Activated T-helper 1 cell treated with anti-CD3 and anti-CD28 coated beads, Interleukin-12 subunit alpha, Interleukin-12 subunit beta, Interleukin-2, Interleukin-4 antibody, amounts not matched to agents 30 ng/mL and 10 ng/mL and 1 ng/mL, durations not matched to agents 14 hours and 24 hours and 36 hours (primary cell): ENCODE measurements at regions of chr6 and their contacts with region 1.

Region 1: GRCh38 chr6:129748212-129748900 is 38.4 kb upstream of the ARHGAP18 start:
- DNase-seq: peak; percentile 37
- H3K4me3 Mint-ChIP-seq: peak overlapping the region; percentile 63
- H3K27ac Mint-ChIP-seq: peak overlapping the region; percentile 63
- H3K4me1 Mint-ChIP-seq: peaks cover 46% of the 10 kb centered on the region
- H3K27me3 Mint-ChIP-seq: no peaks in the 10 kb centered on the region

Region 2: GRCh38 chr6:129448965-129449364 is 299.4 kb before region 1 on chr6:
- intact Hi-C with region 1: loop called (anchors 1 kb)
- DNase-seq: no peak
- H3K4me3 Mint-ChIP-seq: peak overlapping the region; percentile 6
- H3K27ac Mint-ChIP-seq: no peak overlapping the region
- H3K4me1 Mint-ChIP-seq: peaks cover 74% of the 10 kb centered on the region
- H3K27me3 Mint-ChIP-seq: peaks cover 1% of the 10 kb centered on the region

Region 3: GRCh38 chr6:129730477-129731165 is 17.7 kb before region 1 on chr6:
- intact Hi-C with region 1: loop called (anchors 1 kb)
- DNase-seq: no peak
- H3K4me3 Mint-ChIP-seq: no peak overlapping the region
- H3K27ac Mint-ChIP-seq: peak overlapping the region; percentile 29
- H3K4me1 Mint-ChIP-seq: peaks cover 15% of the 10 kb centered on the region
- H3K27me3 Mint-ChIP-seq: peaks cover 4% of the 10 kb centered on the region

Region 4: DNA sequence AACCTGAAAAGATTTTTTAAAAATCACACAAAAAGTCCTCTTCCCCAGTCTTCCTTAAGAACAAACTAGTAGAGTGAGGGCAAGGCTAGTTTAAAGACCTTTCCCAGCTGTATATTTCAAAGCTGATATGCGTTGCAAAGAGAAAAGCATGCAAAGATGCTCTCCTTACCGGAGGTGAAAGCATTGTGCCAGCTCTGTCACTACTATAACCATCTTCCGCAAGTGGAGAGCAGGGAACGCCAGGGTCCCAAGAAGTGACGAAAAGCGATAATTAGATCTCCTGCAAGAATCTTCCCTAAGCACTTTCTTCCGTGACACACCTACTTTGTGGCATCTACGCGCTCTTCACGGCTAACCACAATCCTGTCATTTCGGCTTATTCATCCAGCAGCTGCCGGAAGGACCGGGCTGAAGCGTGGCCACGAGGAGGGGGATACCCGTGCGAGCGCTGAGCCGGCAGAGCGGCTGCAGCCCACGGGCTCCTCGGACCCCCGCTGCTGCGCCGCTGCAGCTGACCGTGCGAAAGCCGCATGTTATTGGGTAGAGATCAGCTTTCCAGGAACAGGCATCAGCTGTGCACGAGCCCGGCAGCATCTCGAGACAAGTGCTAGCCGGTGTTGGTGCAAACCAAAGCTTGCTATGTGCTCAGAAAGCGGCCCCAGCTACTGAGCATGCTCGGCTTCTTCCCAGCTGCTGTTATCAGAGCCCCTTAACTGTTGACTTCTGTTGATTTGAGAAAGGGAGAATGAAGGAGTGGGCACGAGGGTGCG is 18.8 kb after region 1 on chr6:
- intact Hi-C with region 1: loop called (anchors 1 kb)
- DNase-seq: peak; percentile 66
- H3K4me3 Mint-ChIP-seq: peak overlapping the region; percentile 83
- H3K27ac Mint-ChIP-seq: peak overlapping the region; percentile 66
- H3K4me1 Mint-ChIP-seq: peaks cover 37% of the 10 kb centered on the region
- H3K27me3 Mint-ChIP-seq: peaks cover 55% of the 10 kb centered on the region

Region 5: DNA sequence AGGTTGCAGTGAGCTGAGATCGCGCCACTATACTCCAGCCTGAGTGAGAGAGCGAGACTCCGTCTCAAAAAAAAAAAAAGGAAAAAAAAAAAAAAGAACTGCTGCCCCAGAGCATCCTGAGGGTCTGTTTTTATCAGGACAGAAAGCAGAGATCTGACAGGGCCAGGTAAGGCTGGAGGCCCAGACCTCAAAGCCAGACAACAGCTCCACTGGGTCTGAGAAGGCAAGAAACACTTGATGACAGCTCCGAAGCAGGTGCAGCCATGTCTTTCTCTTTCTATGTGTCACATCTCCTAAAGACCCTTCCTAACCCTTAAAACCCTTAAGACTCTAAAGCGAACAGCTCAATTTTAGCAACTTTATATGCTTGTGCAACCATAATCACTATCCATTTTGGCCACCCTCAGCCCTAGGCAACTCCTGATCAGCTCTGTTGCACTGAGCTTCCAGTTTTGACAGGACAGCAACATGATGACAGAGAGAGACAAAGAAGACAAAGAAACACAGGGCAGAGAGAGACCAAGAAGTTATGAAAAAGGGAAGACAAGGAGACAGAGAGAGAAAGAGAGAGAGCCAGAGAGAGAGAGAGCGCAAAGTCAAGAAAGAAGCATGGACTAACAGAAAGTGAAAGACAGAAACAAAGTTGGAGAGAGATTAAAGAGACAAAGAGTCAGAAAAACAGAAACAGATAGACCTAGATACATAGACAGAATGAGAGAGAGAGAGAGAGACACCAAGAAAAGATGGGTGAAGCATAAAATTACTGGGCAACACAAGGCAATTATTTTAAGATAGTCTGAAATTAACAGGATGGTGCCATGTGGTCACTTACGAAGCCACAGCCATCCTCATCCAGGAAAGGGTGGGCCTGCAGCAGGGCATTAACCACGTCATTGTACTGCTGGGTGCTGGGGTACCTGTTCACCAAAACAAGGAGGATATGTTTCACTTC is 435.2 kb after region 1 on chr6:
- intact Hi-C with region 1: loop called (anchors 1 kb)
- DNase-seq: peak; percentile 40
- H3K4me3 Mint-ChIP-seq: peak overlapping the region; percentile 47
- H3K27ac Mint-ChIP-seq: peak overlapping the region; percentile 90
- H3K4me1 Mint-ChIP-seq: peaks cover 50% of the 10 kb centered on the region
- H3K27me3 Mint-ChIP-seq: no peaks in the 10 kb centered on the region